Common myeloid progenitor, CD34-positive (primary cell): ENCODE measurements at regions of chr1 and their contacts with region 1.

Region 1: GRCh38 chr1:19468397-19468956 is 16.9 kb downstream of the CAPZB start:
- DNase-seq: peak in 1 of 3 donors; percentile 63
- H3K4me3 ChIP-seq: peak overlapping the region in 3 of 7 experiments; percentile 14 to 39 (median 33)
- H3K27ac ChIP-seq: peak overlapping the region in 1 of 2 experiments; percentile 74
- H3K4me1 ChIP-seq: peaks cover 38 to 85% (median 77%) of the 10 kb centered on the region in 4 experiments
- H3K27me3 ChIP-seq: no peaks in the 10 kb centered on the region

Region 2: DNA sequence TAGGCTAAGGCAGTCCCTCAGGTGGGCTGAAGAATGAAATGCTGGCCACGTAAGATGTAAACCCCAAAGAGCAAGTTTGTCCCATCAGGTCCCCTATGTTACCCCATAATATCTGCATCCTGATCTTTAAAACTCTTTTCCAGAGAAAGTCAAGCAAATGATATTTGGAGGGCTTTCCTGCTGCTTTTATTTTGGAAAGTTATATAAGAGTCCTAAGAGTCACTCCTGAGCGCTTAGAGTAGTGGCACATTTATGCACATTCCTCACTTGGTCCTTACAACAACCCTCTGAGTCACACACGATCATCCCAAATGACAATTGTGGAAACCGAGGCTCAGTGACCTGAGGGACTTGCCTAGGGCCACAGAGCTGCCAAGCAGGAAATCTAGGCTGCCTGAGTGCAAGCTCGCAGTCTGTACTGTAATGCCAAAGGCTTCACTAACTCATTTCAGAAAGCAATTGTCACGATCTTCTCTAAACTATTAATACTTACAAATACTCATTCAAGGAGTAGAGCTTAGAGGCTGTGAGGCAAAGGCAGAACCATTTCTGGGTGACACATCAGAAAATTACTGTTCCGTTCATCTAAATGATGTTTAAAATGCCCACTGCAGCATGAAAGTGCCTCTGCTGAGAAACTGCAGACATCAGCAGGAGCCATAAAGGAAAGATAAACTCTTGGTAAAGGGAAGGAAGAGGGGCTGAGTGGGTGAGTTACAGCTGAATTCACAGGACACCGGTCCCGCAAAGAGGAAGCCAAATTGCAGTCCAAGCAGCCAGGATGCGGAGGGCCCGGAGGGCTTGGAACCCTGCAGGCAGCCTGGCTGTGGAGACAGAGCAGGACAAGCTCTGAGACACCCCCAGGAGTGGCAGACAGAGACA is 14.0 kb before region 1 on chr1:
- CTCF ChIA-PET with region 1: interaction called, 20 read pairs
- POLR2A ChIA-PET with region 1: interaction called, 3 read pairs
- DNase-seq: peak in 2 of 3 donors; percentile 67 to 72
- H3K4me3 ChIP-seq: peak overlapping the region in 5 of 7 experiments; percentile 8 to 47 (median 23)
- H3K27ac ChIP-seq: peak overlapping the region in 1 of 2 experiments; percentile 28
- H3K4me1 ChIP-seq: peaks cover 26 to 63% (median 54%) of the 10 kb centered on the region in 4 experiments
- H3K27me3 ChIP-seq: no peaks in the 10 kb centered on the region

Region 3: DNA sequence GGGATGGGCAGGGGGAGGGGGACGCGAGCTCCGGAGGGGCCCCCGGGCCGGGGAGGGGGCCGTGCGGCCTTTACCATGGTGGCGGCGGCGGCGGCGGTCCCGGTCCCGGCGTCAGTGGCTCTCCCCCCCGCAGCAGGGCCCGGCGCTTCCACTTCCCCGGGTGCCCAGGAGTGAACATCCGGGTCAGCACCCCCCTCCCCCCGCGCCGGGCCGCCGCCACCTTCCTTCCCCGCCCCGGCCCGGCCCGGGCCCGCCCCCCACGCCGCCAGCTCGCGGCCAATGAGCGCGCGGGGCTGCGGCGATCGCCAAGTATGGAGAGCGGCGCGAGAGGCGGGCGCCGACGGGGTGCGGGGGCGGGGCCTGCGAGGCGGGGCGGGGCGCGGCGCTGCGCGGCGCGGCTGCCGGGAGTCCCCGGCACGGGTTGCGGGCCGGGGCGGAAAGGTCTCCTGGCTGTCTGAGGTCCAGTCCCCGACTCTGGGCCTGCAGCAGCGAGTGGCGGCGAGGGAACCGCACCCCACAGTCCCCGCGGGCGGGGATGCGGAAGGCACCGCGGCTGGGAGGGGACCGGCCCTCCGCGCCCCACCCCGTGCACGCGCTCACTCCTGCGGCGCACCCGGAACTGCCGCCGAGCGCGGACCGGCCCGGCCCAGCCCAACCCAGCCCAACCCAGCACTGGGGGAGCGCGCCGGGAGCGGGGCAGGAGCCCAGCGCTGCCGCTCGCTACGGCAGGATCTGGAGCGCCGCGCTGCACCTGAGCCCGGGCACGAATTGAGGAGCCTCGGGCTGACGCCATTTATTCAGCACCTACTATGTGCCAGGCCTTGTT is 17.1 kb after region 1 on chr1 and contains the start of gene CAPZB:
- CTCF ChIA-PET with region 1: interaction called, 64 read pairs
- POLR2A ChIA-PET with region 1: interaction called, 10 read pairs
- DNase-seq: peak; percentile 87 to 93 (median 89)
- H3K4me3 ChIP-seq: peak within 1 kb of the TSS; percentile 76 to 94 (median 87)
- H3K27ac ChIP-seq: peak within 1 kb of the TSS; percentile 70 to 93
- H3K4me1 ChIP-seq: peaks cover 24 to 61% (median 57%) of the 10 kb centered on the region in 4 experiments
- H3K27me3 ChIP-seq: no peaks in the 10 kb centered on the region

Region 4: DNA sequence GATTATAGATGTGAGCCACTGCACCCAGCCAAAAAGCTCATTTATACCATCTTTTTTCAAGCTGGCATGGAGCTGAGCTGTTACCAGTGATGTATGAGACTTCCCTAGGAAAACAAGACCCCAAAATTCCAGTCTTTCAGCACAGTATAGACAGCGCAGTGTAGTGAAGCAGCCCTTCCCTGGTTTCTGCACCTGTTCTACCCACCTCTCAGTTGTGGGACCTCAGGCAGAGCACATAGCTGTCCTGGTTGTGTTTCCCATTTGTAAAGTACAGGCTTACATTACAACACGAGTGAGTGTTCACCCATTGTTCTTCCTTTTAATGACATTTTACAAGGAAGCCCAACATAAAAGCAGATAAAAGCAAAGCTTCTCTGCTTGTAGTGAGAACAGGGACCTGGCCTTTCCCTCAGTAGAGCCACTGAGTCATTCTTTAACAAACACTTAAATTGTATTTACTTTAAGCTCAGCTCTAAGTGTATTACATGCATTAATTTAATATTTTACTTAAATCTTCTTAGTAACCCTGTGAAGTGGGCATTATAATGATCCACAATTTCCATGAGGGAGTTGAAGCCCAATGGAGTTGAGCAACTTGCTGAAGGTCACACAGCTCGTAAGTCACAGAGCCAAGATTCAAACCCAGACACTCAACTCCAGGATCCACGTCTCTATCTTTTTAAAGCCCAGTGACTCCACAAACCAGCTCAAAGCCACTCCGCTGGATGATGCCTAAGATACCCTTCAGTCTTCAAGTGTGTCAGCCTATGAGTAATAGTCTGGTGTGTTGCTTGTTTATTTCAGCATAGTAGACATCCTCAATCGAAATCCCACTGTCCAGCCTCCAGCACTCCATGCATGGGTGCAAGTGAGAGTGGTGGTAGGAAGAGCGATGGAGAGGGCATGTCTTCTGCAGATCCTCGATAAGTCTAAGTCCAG is 57.4 kb after region 1 on chr1:
- CTCF ChIA-PET with region 1: no interaction called
- POLR2A ChIA-PET with region 1: no interaction called
- DNase-seq: no peak
- H3K4me3 ChIP-seq: no peak overlapping the region
- H3K27ac ChIP-seq: no peak overlapping the region
- H3K4me1 ChIP-seq: no peaks in the 10 kb centered on the region
- H3K27me3 ChIP-seq: no peaks in the 10 kb centered on the region